Endothelial cell of umbilical vein (primary cell): ENCODE measurements at regions of chr14 and their contacts with region 1.

Region 1: GRCh38 chr14:52791203-52792096 is at the start of gene GNPNAT1:
- DNase-seq: peak; percentile 94
- H3K4me3 ChIP-seq: peak within 1 kb of the TSS; percentile 61 to 99 (median 84)
- H3K27ac ChIP-seq: peak within 1 kb of the TSS; percentile 88
- H3K4me1 ChIP-seq: peaks cover 25% of the 10 kb centered on the region
- H3K27me3 ChIP-seq: no peaks in the 10 kb centered on the region
- CTCF ChIP-seq: no peak
- POLR2A ChIP-seq: peak; percentile 96
- total RNA-seq, gene GNPNAT1: 38.2 and 38.9 TPM in 2 replicates

Region 2: GRCh38 chr14:52706724-52707706 is 84.4 kb before region 1 on chr14 and contains the start of gene PSMC6:
- CTCF ChIA-PET with region 1: no interaction called
- POLR2A ChIA-PET with region 1: interaction called, 5 read pairs
- dilution Hi-C with region 1: no loop called
- intact Hi-C with region 1: loop called (anchors 2 kb)
- DNase-seq: peak; percentile 94
- H3K4me3 ChIP-seq: peak within 1 kb of the TSS; percentile 40 to 96 (median 47)
- H3K27ac ChIP-seq: peak within 1 kb of the TSS; percentile 82
- H3K4me1 ChIP-seq: peaks cover 19% of the 10 kb centered on the region
- H3K27me3 ChIP-seq: no peaks in the 10 kb centered on the region
- CTCF ChIP-seq: no peak
- POLR2A ChIP-seq: peak; percentile 81
- total RNA-seq, gene PSMC6: 92.1 and 103 TPM in 2 replicates

Region 3: DNA sequence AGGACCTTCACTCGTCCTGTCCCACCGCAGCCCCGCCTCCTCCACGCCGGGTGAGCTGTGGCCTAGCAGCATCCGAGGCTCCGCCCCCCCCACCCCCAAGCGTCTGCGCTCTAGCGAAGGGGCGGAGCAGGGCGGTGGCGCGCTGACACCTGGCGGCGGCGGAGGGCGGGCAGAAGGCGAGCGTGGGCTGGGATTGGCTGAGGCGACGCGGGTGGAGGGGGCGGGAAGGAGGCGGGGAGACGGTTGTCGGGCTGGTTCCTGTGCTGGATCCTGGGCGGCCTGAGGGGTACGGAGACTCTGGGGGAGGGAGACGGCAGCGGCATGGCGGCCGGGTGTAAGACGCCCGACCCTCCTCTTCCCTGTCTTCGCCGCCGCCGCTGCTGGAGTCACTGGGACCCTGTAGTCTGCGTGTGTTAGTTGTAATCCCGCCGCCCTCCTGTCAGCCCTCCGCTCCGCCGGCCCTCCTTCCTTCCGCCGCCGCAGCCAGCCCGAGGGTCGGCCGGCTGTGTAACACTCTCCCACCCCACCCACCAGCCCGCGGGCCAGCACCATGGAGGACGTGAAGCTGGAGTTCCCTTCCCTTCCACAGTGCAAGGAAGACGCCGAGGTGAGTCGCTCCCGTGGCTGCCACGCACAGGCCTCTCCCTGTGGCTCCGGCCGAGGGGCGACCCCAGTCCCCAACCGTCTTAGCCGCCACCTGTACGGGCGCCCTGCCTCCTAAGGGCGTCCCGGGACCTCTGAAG is 61.4 kb before region 1 on chr14 and contains the start of gene STYX:
- CTCF ChIA-PET with region 1: interaction called, 3 read pairs
- POLR2A ChIA-PET with region 1: interaction called, 8 read pairs
- dilution Hi-C with region 1: no loop called
- intact Hi-C with region 1: loop called (anchors 1 kb)
- DNase-seq: peak; percentile 99
- H3K4me3 ChIP-seq: peak within 1 kb of the TSS; percentile 50 to 98 (median 88)
- H3K27ac ChIP-seq: peak within 1 kb of the TSS; percentile 29
- H3K4me1 ChIP-seq: peaks cover 3% of the 10 kb centered on the region
- H3K27me3 ChIP-seq: no peaks in the 10 kb centered on the region
- CTCF ChIP-seq: no peak
- POLR2A ChIP-seq: peak; percentile 78
- total RNA-seq, gene STYX: 21.0 and 21.3 TPM in 2 replicates

Region 4: GRCh38 chr14:52741865-52742264 is 49.6 kb before region 1 on chr14:
- CTCF ChIA-PET with region 1: no interaction called
- POLR2A ChIA-PET with region 1: no interaction called
- dilution Hi-C with region 1: no loop called
- intact Hi-C with region 1: loop called (anchors 2 kb)
- DNase-seq: peak; percentile 33
- H3K4me3 ChIP-seq: peak overlapping the region in 1 of 3 experiments; percentile 11
- H3K27ac ChIP-seq: peak overlapping the region; percentile 82
- H3K4me1 ChIP-seq: peaks cover 25% of the 10 kb centered on the region
- H3K27me3 ChIP-seq: no peaks in the 10 kb centered on the region
- CTCF ChIP-seq: no peak
- POLR2A ChIP-seq: no peak

Region 5: DNA sequence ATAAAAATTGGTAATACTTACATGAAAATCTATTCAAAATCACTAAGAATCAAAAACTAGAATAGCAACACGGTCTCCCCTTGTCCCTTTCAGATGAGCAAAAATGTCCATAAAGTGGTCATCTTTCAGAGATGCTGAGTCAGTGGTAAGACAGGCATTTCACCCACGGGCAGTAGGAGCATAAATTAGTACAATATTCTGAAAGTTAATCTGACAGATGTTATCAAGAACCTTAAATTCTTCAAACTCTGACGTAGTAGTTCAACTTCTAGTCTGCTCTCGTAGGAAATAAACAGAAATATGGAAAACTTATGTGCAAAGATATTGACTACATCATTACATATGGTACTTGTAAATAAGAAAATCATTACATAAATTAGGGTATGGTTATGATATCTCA is 33.1 kb after region 1 on chr14:
- CTCF ChIA-PET with region 1: no interaction called
- POLR2A ChIA-PET with region 1: no interaction called
- dilution Hi-C with region 1: no loop called
- intact Hi-C with region 1: loop called (anchors 2 kb)
- DNase-seq: peak; percentile 17
- H3K4me3 ChIP-seq: no peak overlapping the region
- H3K27ac ChIP-seq: no peak overlapping the region
- H3K4me1 ChIP-seq: peaks cover 4% of the 10 kb centered on the region
- H3K27me3 ChIP-seq: no peaks in the 10 kb centered on the region
- CTCF ChIP-seq: no peak
- POLR2A ChIP-seq: no peak

Region 6: GRCh38 chr14:52918486-52918885 is 127.0 kb after region 1 on chr14:
- CTCF ChIA-PET with region 1: no interaction called
- POLR2A ChIA-PET with region 1: no interaction called
- dilution Hi-C with region 1: no loop called
- intact Hi-C with region 1: loop called (anchors 5 kb)
- DNase-seq: peak; percentile 95
- H3K4me3 ChIP-seq: no peak overlapping the region
- H3K27ac ChIP-seq: peak overlapping the region; percentile 91
- H3K4me1 ChIP-seq: peaks cover 42% of the 10 kb centered on the region
- H3K27me3 ChIP-seq: no peaks in the 10 kb centered on the region
- CTCF ChIP-seq: no peak
- POLR2A ChIP-seq: no peak